ENCODE measurements at regions of chr12 and their contacts with region 1.

Region 1: GRCh38 chr12:26971963-26972362 is 33.7 kb downstream of the FGFR1OP2 start:
- DNase-seq: no peak
- H3K4me3 ChIP-seq: no peak overlapping the region
- H3K27ac ChIP-seq: no peak overlapping the region
- H3K4me1 ChIP-seq: no peaks in the 10 kb centered on the region
- H3K27me3 ChIP-seq: no peaks in the 10 kb centered on the region
- CTCF ChIP-seq: no peak

Region 2: DNA sequence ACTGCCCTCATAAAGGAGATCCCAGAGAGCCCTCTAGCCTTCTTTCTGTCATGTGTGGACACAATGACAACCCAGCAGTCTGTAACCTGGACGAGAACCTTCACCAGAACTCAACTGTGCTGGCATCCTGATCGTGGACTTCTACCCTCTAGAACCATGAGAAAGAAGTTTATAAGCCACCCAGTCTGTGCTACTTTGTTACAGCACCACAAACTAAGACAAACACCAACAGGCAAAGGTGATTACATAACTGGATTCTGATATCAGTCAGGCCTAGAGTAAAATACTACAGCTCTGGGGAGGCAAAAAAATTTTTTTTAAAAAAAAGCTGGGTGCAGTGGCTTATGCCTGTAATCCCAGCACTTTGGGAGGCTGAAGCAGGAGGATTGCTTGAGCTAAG is 23.7 kb after region 1 on chr12:
- CTCF ChIA-PET with region 1: no interaction called
- POLR2A ChIA-PET with region 1: interaction called, 5 read pairs
- intact Hi-C with region 1: loop called (anchors 2 kb)
- DNase-seq: no peak
- H3K4me3 ChIP-seq: no peak overlapping the region
- H3K27ac ChIP-seq: no peak overlapping the region
- H3K4me1 ChIP-seq: no peaks in the 10 kb centered on the region
- H3K27me3 ChIP-seq: no peaks in the 10 kb centered on the region
- CTCF ChIP-seq: no peak